ENCODE measurements at regions of chr13 and their contacts with region 1.

Region 1: GRCh38 chr13:97109841-97110492 is 112.2 kb upstream of the MBNL2 start:
- DNase-seq: peak; percentile 91 to 94
- ATAC-seq: peak; percentile 96 to 98 (median 98)
- H3K4me3 ChIP-seq: peak overlapping the region in 7 of 10 donors; percentile 5 to 38 (median 26)
- H3K27ac ChIP-seq: peak overlapping the region in 5 of 10 donors; percentile 24 to 60 (median 45)
- H3K4me1 ChIP-seq: peaks cover 0 to 32% (median 23%) of the 10 kb centered on the region in 9 donors
- H3K27me3 ChIP-seq: peaks cover 0 to 5% (median 0%) of the 10 kb centered on the region in 7 donors
- CTCF ChIP-seq: peak; percentile 94 to 100 (median 99)

Region 2: GRCh38 chr13:97221989-97222700 is 112.2 kb after region 1 on chr13 and contains the start of gene MBNL2:
- intact Hi-C with region 1: loop called in 1 of 10 experiments (anchors 5 kb)
- DNase-seq: peak; percentile 88 to 93
- ATAC-seq: peak; percentile 94 to 97 (median 96)
- H3K4me3 ChIP-seq: peak within 1 kb of the TSS; percentile 51 to 84 (median 62)
- H3K27ac ChIP-seq: peak within 1 kb of the TSS; percentile 78 to 93 (median 90)
- H3K4me1 ChIP-seq: peaks cover 6 to 37% (median 31%) of the 10 kb centered on the region in 9 donors
- H3K27me3 ChIP-seq: no peaks in the 10 kb centered on the region
- CTCF ChIP-seq: no peak
- total RNA-seq, gene MBNL2: 59.7 to 95.0 (median 85.2) TPM

Region 3: DNA sequence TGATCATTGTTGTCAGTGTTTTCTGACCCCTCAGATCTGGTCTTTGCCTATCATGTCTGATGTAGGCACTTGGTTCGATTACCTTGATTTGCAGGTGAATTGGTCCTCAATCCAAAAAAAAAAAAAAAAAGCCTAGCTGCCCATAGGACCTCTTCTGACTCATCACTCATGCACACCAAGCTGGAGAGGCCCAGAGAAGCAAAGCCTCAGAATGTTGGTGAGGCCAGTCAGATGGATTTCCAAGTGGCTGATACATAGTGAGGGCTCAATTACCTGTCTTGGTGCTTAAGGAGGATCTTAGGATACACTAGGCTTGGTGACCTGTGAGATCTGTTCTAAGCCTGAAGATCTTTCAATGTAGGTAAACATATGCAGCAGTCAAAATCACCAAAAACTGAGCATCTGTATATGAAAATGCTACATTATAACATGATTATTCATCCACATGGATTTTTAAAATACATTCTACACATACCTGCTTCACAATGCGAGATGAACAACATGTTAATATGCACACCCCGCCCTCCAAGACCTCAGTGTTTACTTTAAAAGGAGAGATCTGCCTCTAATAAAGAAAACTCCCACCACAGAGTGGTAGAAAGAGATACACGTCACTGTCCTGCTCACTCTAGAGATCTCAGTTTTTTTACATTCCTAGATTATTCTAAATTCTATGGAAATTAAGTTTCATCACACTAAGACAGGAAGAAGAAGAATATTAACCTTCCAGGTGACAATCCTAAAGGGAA is 244.1 kb after region 1 on chr13:
- intact Hi-C with region 1: loop called in 9 of 10 experiments (anchors 1 to 5 kb)
- DNase-seq: no peak
- ATAC-seq: no peak
- H3K4me3 ChIP-seq: no peak overlapping the region
- H3K27ac ChIP-seq: peak overlapping the region in 1 of 10 donors; percentile 32
- H3K4me1 ChIP-seq: peaks cover 0 to 55% (median 17%) of the 10 kb centered on the region in 9 donors
- H3K27me3 ChIP-seq: no peaks in the 10 kb centered on the region
- CTCF ChIP-seq: no peak

Region 4: DNA sequence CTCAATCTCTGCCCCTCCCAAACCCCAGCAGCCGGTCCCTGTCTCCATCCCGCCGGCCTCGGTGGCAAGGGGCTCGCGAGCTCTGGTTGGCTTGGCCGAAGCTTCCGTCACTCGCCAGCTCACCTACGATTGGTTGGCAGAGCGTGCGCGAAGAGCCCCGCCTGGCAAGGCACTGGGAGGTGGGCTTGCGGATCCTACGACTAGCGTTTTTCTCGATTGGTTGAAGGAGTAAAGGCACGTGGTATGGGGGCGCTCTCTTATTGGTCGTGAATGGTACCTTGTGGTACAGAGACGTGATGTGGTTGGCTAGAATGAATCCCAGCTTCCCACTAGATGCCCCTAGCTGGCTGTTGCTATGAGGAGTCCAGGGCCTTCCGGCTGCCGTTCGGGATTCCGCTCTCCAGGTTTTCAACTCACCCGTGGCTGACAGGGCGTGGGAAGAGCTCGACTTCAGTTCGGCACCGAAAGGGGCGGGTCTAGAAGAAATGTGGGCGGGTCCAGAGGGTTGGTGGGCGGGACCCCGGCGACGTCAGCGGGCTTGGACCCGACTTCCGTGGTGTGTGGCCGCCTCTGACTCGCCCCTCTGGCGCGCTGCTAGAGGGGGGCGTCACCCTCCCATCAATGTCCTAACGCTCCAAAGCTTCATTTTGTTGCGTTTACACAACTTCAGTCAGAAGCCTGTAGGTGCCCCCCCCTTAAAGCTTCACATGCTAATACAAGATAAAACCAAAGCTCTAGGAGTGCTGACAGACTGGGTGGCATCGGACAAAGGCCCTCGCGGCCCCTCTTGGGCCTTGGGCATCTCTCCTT is 323.2 kb after region 1 on chr13:
- intact Hi-C with region 1: loop called in 3 of 10 experiments (anchors 1 to 5 kb)
- DNase-seq: peak; percentile 98 to 99
- ATAC-seq: peak; percentile 91 to 98 (median 94)
- H3K4me3 ChIP-seq: peak overlapping the region; percentile 66 to 98 (median 84)
- H3K27ac ChIP-seq: peak overlapping the region; percentile 95 to 100 (median 99)
- H3K4me1 ChIP-seq: peaks cover 0 to 54% (median 37%) of the 10 kb centered on the region in 9 donors
- H3K27me3 ChIP-seq: no peaks in the 10 kb centered on the region
- CTCF ChIP-seq: no peak

Region 5: GRCh38 chr13:97659602-97660001 is 549.6 kb after region 1 on chr13:
- intact Hi-C with region 1: loop called in 1 of 10 experiments (anchors 10 kb)
- DNase-seq: peak in 1 of 2 donors; percentile 6
- ATAC-seq: peak in 5 of 8 donors; percentile 37 to 76 (median 74)
- H3K4me3 ChIP-seq: no peak overlapping the region
- H3K27ac ChIP-seq: no peak overlapping the region
- H3K4me1 ChIP-seq: peaks cover 0 to 40% (median 3%) of the 10 kb centered on the region in 9 donors
- H3K27me3 ChIP-seq: no peaks in the 10 kb centered on the region
- CTCF ChIP-seq: peak in 8 of 9 donors; percentile 25 to 67 (median 49)

Measured in heart right ventricle (tissue), 16 donors.